ENCODE measurements at regions of chr17 and their contacts with region 1.

Region 1: GRCh38 chr17:78250891-78251794 is 19.7 kb downstream of the TMEM235 start:
- DNase-seq: peak; percentile 78
- H3K4me3 ChIP-seq: no peak overlapping the region
- H3K27ac ChIP-seq: no peak overlapping the region
- H3K4me1 ChIP-seq: peaks cover 4% of the 10 kb centered on the region
- H3K27me3 ChIP-seq: no peaks in the 10 kb centered on the region
- CTCF ChIP-seq: peak; percentile 99 to 100
- POLR2A ChIP-seq: no peak

Region 2: GRCh38 chr17:78112518-78113226 is 138.5 kb before region 1 on chr17:
- CTCF ChIA-PET with region 1: interaction called, 16 read pairs
- POLR2A ChIA-PET with region 1: no interaction called
- dilution Hi-C with region 1: no loop called
- intact Hi-C with region 1: loop called (anchors 1 kb)
- DNase-seq: peak; percentile 51
- H3K4me3 ChIP-seq: no peak overlapping the region
- H3K27ac ChIP-seq: no peak overlapping the region
- H3K4me1 ChIP-seq: no peaks in the 10 kb centered on the region
- H3K27me3 ChIP-seq: no peaks in the 10 kb centered on the region
- CTCF ChIP-seq: peak; percentile 98 to 99
- POLR2A ChIP-seq: no peak

Region 3: DNA sequence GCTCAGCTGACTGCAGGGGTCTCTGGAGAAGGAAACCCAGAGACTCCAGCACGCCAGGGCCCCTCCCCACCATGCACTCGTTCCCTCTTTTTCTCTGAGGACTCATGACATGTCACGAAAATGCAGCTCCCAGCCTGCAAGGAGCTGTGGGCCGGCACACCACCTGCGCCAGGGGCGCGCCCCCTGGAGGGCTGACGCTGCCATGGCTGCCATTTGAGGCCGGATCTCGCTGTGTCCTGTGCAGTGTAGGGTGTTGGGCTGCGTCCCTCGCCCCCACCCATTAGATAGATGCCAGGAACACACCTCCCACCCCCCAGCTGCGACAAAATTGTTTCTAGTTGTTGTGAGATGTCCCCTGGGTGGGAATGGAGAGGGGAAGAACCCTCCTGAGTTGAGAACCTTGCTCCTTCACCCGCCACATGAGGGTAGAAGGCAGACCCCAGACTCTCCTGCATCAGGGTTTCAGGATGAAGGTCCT is 74.6 kb before region 1 on chr17:
- CTCF ChIA-PET with region 1: interaction called, 21 read pairs
- POLR2A ChIA-PET with region 1: no interaction called
- dilution Hi-C with region 1: no loop called
- intact Hi-C with region 1: loop called (anchors 1 kb)
- DNase-seq: peak; percentile 52
- H3K4me3 ChIP-seq: no peak overlapping the region
- H3K27ac ChIP-seq: no peak overlapping the region
- H3K4me1 ChIP-seq: peaks cover 8% of the 10 kb centered on the region
- H3K27me3 ChIP-seq: no peaks in the 10 kb centered on the region
- CTCF ChIP-seq: peak; percentile 96 to 98
- POLR2A ChIP-seq: no peak

Region 4: DNA sequence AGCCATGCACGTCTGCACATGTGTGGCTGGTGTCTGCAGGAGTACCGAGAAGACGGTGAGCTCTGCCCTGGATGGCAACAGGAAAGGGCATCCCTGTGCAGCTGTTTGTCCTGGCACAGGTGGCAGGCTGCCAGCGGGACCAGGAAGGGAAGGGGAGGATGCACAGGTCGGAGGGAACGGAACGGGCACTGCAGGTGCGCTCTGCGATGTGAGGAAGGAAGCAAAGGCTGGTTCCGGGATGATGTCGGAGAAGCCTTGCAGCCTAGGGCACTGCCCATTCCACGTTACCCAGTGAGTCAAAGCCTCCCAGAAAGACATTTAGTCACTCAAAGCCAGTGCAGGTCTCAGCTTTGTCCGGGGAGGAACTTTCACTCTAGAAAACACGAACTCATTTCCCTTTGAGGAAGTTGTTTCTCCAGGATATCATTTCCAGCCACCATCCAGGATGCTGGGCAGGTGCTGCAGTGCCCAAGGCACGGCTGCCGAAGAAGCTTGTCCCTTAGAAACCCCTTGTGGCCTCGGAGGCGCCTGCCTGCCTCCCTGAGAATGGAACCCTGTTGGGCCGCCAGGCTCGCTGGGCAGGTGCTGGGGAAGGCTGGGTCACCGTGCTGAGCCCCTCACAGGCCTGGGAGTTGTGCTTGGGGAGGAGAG is 24.3 kb before region 1 on chr17:
- CTCF ChIA-PET with region 1: interaction called, 39 read pairs
- POLR2A ChIA-PET with region 1: no interaction called
- dilution Hi-C with region 1: no loop called
- intact Hi-C with region 1: no loop called
- DNase-seq: peak; percentile 65
- H3K4me3 ChIP-seq: no peak overlapping the region
- H3K27ac ChIP-seq: no peak overlapping the region
- H3K4me1 ChIP-seq: peaks cover 31% of the 10 kb centered on the region
- H3K27me3 ChIP-seq: peaks cover 13 to 18% of the 10 kb centered on the region in 2 experiments
- CTCF ChIP-seq: no peak
- POLR2A ChIP-seq: no peak

Region 5: GRCh38 chr17:78237401-78238012 is 13.6 kb before region 1 on chr17:
- CTCF ChIA-PET with region 1: interaction called, 13 read pairs
- POLR2A ChIA-PET with region 1: no interaction called
- dilution Hi-C with region 1: no loop called
- intact Hi-C with region 1: no loop called
- DNase-seq: no peak
- H3K4me3 ChIP-seq: no peak overlapping the region
- H3K27ac ChIP-seq: no peak overlapping the region
- H3K4me1 ChIP-seq: peaks cover 3% of the 10 kb centered on the region
- H3K27me3 ChIP-seq: peaks cover under 1 to 4% of the 10 kb centered on the region in 2 experiments
- CTCF ChIP-seq: no peak
- POLR2A ChIP-seq: no peak

Region 6: GRCh38 chr17:78268951-78269905 is 18.1 kb after region 1 on chr17:
- CTCF ChIA-PET with region 1: interaction called, 11 read pairs
- POLR2A ChIA-PET with region 1: no interaction called
- dilution Hi-C with region 1: no loop called
- intact Hi-C with region 1: no loop called
- DNase-seq: no peak
- H3K4me3 ChIP-seq: no peak overlapping the region
- H3K27ac ChIP-seq: no peak overlapping the region
- H3K4me1 ChIP-seq: peaks cover 2% of the 10 kb centered on the region
- H3K27me3 ChIP-seq: peaks cover 22 to 25% of the 10 kb centered on the region in 2 experiments
- CTCF ChIP-seq: no peak
- POLR2A ChIP-seq: no peak

Region 7: GRCh38 chr17:78322858-78323455 is 71.8 kb after region 1 on chr17:
- CTCF ChIA-PET with region 1: no interaction called
- POLR2A ChIA-PET with region 1: no interaction called
- dilution Hi-C with region 1: no loop called
- intact Hi-C with region 1: no loop called
- DNase-seq: no peak
- H3K4me3 ChIP-seq: no peak overlapping the region
- H3K27ac ChIP-seq: peak overlapping the region; percentile 90
- H3K4me1 ChIP-seq: peaks cover 28% of the 10 kb centered on the region
- H3K27me3 ChIP-seq: no peaks in the 10 kb centered on the region
- CTCF ChIP-seq: no peak
- POLR2A ChIP-seq: no peak

Region 8: DNA sequence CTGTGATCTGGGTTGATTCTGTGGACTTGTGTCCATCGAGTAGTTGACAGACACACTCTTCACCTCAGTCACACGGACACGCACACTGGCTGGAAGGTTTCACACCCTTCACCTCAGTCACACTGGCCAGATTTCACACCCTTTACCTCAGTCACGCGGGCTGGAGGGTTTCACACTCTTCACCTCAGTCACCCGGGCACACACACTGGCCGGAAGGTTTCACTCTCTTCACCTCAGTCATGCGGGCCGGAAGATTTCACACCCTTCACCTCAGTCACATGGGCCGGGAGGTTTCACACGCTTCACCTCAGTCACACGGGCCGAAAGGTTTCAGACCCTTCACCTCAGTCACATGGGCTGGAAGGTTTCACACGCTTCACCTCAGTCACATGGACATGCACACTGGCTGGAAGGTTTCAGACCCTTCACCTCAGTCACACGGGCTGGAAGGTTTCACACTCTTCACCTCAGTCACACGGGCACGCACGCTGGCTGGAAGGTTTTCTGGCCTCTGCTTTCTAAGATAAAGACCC is 223.5 kb after region 1 on chr17:
- CTCF ChIA-PET with region 1: no interaction called
- POLR2A ChIA-PET with region 1: no interaction called
- dilution Hi-C with region 1: no loop called
- intact Hi-C with region 1: no loop called
- DNase-seq: no peak
- H3K4me3 ChIP-seq: no peak overlapping the region
- H3K27ac ChIP-seq: no peak overlapping the region
- H3K4me1 ChIP-seq: no peaks in the 10 kb centered on the region
- H3K27me3 ChIP-seq: peaks cover 0 to 5% of the 10 kb centered on the region in 2 experiments
- CTCF ChIP-seq: no peak
- POLR2A ChIP-seq: no peak

Region 9: GRCh38 chr17:78501241-78502036 is 250.3 kb after region 1 on chr17:
- CTCF ChIA-PET with region 1: no interaction called
- POLR2A ChIA-PET with region 1: no interaction called
- dilution Hi-C with region 1: no loop called
- intact Hi-C with region 1: no loop called
- DNase-seq: no peak
- H3K4me3 ChIP-seq: no peak overlapping the region
- H3K27ac ChIP-seq: no peak overlapping the region
- H3K4me1 ChIP-seq: no peaks in the 10 kb centered on the region
- H3K27me3 ChIP-seq: no peaks in the 10 kb centered on the region
- CTCF ChIP-seq: no peak
- POLR2A ChIP-seq: no peak

Region 10: GRCh38 chr17:78708510-78708973 is 457.4 kb after region 1 on chr17:
- CTCF ChIA-PET with region 1: interaction called, 3 read pairs
- POLR2A ChIA-PET with region 1: no interaction called
- dilution Hi-C with region 1: no loop called
- intact Hi-C with region 1: loop called (anchors 10 kb)
- DNase-seq: peak; percentile 72
- H3K4me3 ChIP-seq: no peak overlapping the region
- H3K27ac ChIP-seq: no peak overlapping the region
- H3K4me1 ChIP-seq: peaks cover 16% of the 10 kb centered on the region
- H3K27me3 ChIP-seq: no peaks in the 10 kb centered on the region
- CTCF ChIP-seq: peak; percentile 87 to 90
- POLR2A ChIP-seq: no peak

Region 11: GRCh38 chr17:78723001-78723796 is 472.1 kb after region 1 on chr17:
- CTCF ChIA-PET with region 1: no interaction called
- POLR2A ChIA-PET with region 1: no interaction called
- dilution Hi-C with region 1: no loop called
- intact Hi-C with region 1: no loop called
- DNase-seq: no peak
- H3K4me3 ChIP-seq: no peak overlapping the region
- H3K27ac ChIP-seq: no peak overlapping the region
- H3K4me1 ChIP-seq: peaks cover under 1% of the 10 kb centered on the region
- H3K27me3 ChIP-seq: no peaks in the 10 kb centered on the region
- CTCF ChIP-seq: no peak
- POLR2A ChIP-seq: no peak

Measured in endothelial cell of umbilical vein (primary cell).